ENCODE measurements at regions of chr12 and their contacts with region 1.

Region 1: GRCh38 chr12:121190523-121191031 is 19.4 kb upstream of the P2RX4 start:
- DNase-seq: peak; percentile 85
- H3K4me3 ChIP-seq: no peak overlapping the region
- H3K27ac ChIP-seq: peak overlapping the region; percentile 92
- H3K4me1 ChIP-seq: peaks cover 51% of the 10 kb centered on the region
- H3K27me3 ChIP-seq: no peaks in the 10 kb centered on the region
- CTCF ChIP-seq: no peak
- POLR2A ChIP-seq: no peak

Region 2: DNA sequence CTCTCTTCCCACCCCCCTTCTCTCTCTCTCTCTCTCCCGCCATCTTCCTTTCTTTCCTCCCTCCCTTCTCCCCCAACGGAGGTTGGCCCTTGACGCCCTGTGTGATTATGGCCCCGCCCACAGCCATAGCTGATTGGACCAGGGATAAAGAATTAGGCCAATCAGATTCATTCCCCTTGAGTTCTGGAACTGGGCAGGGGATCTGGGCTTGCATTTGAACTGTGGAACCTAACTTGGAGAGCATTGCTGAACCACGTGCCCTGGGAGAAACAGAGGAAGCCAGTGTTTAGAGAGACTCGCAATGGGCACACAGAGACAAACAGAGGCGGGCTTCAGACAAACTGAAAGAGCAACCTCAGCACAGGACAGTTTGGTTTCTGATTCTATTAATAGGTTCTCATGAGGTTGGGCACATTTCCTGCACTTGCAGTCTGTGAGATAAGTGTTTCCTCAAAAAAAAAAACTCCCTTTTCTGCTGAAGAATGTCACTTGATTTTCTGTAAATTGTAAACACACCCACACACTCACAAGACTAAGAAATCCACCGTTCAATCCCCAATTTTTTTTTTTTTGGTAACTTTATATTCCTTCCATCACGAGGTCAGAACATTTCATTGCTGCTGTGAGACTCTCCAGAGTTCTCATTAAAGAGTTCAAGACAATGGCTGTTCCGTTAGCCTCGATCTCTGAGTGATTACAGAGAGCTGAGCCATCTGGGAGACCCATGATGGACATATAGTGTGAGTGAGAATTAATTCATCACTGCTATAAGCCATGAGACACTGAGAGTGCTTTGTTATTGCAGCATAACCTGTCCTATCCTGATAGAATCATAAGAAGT is 61.4 kb before region 1 on chr12:
- CTCF ChIA-PET with region 1: no interaction called
- POLR2A ChIA-PET with region 1: no interaction called
- dilution Hi-C with region 1: no loop called
- intact Hi-C with region 1: loop called (anchors 2 kb)
- DNase-seq: peak; percentile 79
- H3K4me3 ChIP-seq: peak overlapping the region in 1 of 3 experiments; percentile 18
- H3K27ac ChIP-seq: peak overlapping the region; percentile 18
- H3K4me1 ChIP-seq: peaks cover 25% of the 10 kb centered on the region
- H3K27me3 ChIP-seq: no peaks in the 10 kb centered on the region
- CTCF ChIP-seq: no peak
- POLR2A ChIP-seq: no peak

Region 3: GRCh38 chr12:121170611-121171260 is 19.8 kb before region 1 on chr12:
- CTCF ChIA-PET with region 1: interaction called, 6 read pairs
- POLR2A ChIA-PET with region 1: no interaction called
- dilution Hi-C with region 1: no loop called
- intact Hi-C with region 1: loop called (anchors 1 kb)
- DNase-seq: peak; percentile 28
- H3K4me3 ChIP-seq: no peak overlapping the region
- H3K27ac ChIP-seq: peak overlapping the region; percentile 64
- H3K4me1 ChIP-seq: peaks cover 11% of the 10 kb centered on the region
- H3K27me3 ChIP-seq: no peaks in the 10 kb centered on the region
- CTCF ChIP-seq: no peak
- POLR2A ChIP-seq: no peak

Region 4: GRCh38 chr12:121209624-121210572 is 19.3 kb after region 1 on chr12 and contains the start of gene P2RX4:
- CTCF ChIA-PET with region 1: interaction called, 5 read pairs
- POLR2A ChIA-PET with region 1: interaction called, 5 read pairs
- dilution Hi-C with region 1: no loop called
- intact Hi-C with region 1: loop called (anchors 1 kb)
- DNase-seq: peak; percentile 76
- H3K4me3 ChIP-seq: peak within 1 kb of the TSS; percentile 35 to 75 (median 52)
- H3K27ac ChIP-seq: peak within 1 kb of the TSS; percentile 59
- H3K4me1 ChIP-seq: peaks cover 23% of the 10 kb centered on the region
- H3K27me3 ChIP-seq: no peaks in the 10 kb centered on the region
- CTCF ChIP-seq: peak; percentile 16 to 23
- POLR2A ChIP-seq: peak; percentile 78
- total RNA-seq, gene P2RX4: 72.8 and 116 TPM in 2 replicates

Region 5: DNA sequence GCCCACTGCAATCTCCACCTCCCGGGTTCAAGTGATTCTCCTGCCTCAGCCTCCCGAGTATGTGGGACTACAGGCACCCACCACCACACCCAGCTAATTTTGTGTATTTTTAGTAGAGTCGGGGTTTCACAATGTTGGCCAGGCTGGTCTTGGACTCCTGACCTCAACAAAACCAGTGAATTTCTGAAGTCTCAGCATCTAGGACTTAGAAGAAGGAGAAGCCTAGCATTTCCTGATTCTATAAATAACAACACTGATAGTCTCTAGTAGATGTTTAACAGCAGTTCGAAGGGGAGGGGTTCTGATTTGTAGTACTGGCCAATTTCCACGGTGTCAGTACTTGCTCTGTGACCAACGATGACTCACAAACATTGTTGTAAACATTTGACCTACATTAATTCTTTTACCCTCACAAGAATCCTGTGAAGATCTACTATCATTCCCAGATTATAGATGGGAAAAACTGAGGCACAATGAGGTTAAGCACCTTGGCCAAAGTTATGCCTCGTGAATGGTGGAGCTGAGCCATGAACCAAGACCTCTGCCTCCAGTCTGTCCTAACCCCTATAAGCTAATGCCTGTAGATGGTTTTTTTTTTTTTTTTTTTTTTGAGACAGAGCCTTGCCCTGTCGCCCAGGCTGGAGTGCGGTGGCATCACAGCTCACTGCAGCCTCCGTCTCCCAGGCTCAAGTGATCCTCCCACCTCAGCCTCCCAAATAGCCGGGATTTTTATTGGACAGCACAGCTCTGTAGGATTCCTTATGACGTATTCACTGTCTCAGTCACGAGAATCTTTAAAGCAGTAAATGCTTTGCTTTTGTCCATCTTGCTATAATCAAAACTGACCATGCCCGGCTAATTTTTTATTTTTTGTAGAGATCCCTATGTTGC is 24.5 kb after region 1 on chr12:
- CTCF ChIA-PET with region 1: interaction called, 5 read pairs
- POLR2A ChIA-PET with region 1: interaction called, 5 read pairs
- dilution Hi-C with region 1: no loop called
- intact Hi-C with region 1: loop called (anchors 1 kb)
- DNase-seq: peak; percentile 76
- H3K4me3 ChIP-seq: no peak overlapping the region
- H3K27ac ChIP-seq: peak overlapping the region; percentile 72
- H3K4me1 ChIP-seq: peaks cover 19% of the 10 kb centered on the region
- H3K27me3 ChIP-seq: no peaks in the 10 kb centered on the region
- CTCF ChIP-seq: no peak
- POLR2A ChIP-seq: no peak

Region 6: GRCh38 chr12:121230538-121230907 is 39.9 kb after region 1 on chr12:
- CTCF ChIA-PET with region 1: interaction called, 5 read pairs
- POLR2A ChIA-PET with region 1: no interaction called
- dilution Hi-C with region 1: no loop called
- intact Hi-C with region 1: loop called (anchors 1 kb)
- DNase-seq: no peak
- H3K4me3 ChIP-seq: no peak overlapping the region
- H3K27ac ChIP-seq: no peak overlapping the region
- H3K4me1 ChIP-seq: no peaks in the 10 kb centered on the region
- H3K27me3 ChIP-seq: no peaks in the 10 kb centered on the region
- CTCF ChIP-seq: no peak
- POLR2A ChIP-seq: no peak

Region 7: DNA sequence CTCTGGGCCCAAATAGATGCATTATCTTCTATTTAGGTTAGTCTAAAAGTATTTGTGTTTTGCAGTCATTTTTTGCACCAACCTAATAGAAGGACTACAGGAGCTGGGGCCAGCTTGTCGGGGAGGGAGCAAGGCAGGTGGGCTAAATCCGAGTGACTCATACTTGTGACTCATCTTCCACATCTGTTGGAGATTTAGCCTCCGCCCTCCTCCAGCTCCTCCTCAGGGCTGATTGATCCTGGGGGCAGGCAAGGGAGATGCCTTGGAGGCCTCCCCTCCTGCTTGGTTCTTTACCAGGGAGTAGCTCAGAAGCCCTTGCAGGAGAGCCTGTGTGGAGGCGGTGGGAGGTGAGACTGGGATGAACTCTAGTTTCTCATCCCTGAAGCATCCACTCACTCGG is 575.0 kb after region 1 on chr12:
- CTCF ChIA-PET with region 1: no interaction called
- POLR2A ChIA-PET with region 1: no interaction called
- dilution Hi-C with region 1: no loop called
- intact Hi-C with region 1: no loop called
- DNase-seq: no peak
- H3K4me3 ChIP-seq: no peak overlapping the region
- H3K27ac ChIP-seq: no peak overlapping the region
- H3K4me1 ChIP-seq: no peaks in the 10 kb centered on the region
- H3K27me3 ChIP-seq: no peaks in the 10 kb centered on the region
- CTCF ChIP-seq: no peak
- POLR2A ChIP-seq: no peak

Measured in endothelial cell of umbilical vein (primary cell).